H1 (cell line): ENCODE measurements at regions of chr20 and their contacts with region 1.

Region 1: DNA sequence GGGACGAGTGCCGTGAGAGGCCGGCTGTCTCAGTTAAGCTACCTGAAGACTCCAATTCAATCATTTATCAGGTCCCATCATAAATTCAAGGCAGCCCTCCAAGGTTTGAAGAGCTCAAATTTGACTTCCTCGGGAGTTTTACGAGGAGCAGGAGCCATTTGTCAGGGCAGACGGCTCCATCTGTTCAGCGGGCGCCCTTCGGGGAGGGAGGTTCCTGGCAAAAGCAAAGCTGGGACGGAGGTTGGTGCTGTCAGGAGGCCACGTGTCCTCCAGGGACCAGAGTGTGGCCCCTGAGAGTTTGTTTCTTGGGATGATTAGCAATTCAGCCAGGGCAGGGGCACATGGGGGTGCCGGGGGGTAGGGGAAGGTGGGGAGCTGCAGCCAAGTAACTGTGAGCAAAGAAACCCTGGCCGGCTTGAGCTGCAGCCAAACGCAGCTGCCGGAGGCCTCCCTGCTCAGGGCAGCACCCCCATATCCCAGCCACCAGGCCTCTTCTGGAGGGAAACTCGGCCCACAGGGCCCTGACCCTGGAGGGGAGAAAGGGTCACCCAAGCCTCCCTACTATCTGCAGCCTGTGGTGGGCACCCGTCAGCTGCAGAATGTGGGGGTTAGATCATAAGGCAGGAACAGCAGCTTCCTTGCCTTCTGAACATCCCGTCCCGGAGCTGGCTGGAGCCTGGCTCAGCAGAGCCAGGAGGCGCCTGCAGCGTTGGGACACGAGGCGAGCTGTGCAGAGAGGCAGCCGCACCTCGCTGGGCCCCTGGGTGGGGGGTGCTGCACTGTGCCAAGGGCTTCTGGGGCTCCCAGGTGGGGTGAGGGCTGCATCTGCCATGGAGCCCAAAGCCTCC is 63.6 kb upstream of the GATA5 start:
- DNase-seq: no peak
- H3K4me3 ChIP-seq: no peak overlapping the region
- H3K27ac ChIP-seq: no peak overlapping the region
- H3K4me1 ChIP-seq: no peaks in the 10 kb centered on the region
- H3K27me3 ChIP-seq: no peaks in the 10 kb centered on the region; a peak in 1 of 7 replicates
- CTCF ChIP-seq: no peak
- EP300 ChIP-seq: no peak
- POLR2A ChIP-seq: no peak
- RAD21 ChIP-seq: no peak

Region 2: GRCh38 chr20:62550087-62550632 is 10.7 kb after region 1 on chr20:
- CTCF ChIA-PET with region 1: interaction called, 49 read pairs
- POLR2A ChIA-PET with region 1: interaction called, 3 read pairs
- DNase-seq: no peak
- H3K4me3 ChIP-seq: peak overlapping the region; percentile 17 to 65 (median 32); a peak in 5 of 8 replicates
- H3K27ac ChIP-seq: no peak overlapping the region
- H3K4me1 ChIP-seq: peaks cover 0 to 11% (median 2%) of the 10 kb centered on the region in 4 experiments; a peak in 5 of 7 replicates
- H3K27me3 ChIP-seq: peaks cover 10 to 30% (median 20%) of the 10 kb centered on the region in 4 experiments
- CTCF ChIP-seq: no peak
- EP300 ChIP-seq: no peak
- POLR2A ChIP-seq: no peak
- RAD21 ChIP-seq: no peak

Region 3: GRCh38 chr20:62557445-62557844 is 18.0 kb after region 1 on chr20:
- CTCF ChIA-PET with region 1: interaction called, 15 read pairs
- POLR2A ChIA-PET with region 1: no interaction called
- DNase-seq: no peak
- H3K4me3 ChIP-seq: no peak overlapping the region
- H3K27ac ChIP-seq: no peak overlapping the region
- H3K4me1 ChIP-seq: no peaks in the 10 kb centered on the region; a peak in 1 of 7 replicates
- H3K27me3 ChIP-seq: peaks cover 0 to 3% (median 0%) of the 10 kb centered on the region in 4 experiments; a peak in 2 of 7 replicates
- CTCF ChIP-seq: no peak
- EP300 ChIP-seq: no peak
- POLR2A ChIP-seq: no peak
- RAD21 ChIP-seq: no peak